KBM-7 (cell line): ENCODE measurements at regions of chr3 and their contacts with region 1.

Region 1: DNA sequence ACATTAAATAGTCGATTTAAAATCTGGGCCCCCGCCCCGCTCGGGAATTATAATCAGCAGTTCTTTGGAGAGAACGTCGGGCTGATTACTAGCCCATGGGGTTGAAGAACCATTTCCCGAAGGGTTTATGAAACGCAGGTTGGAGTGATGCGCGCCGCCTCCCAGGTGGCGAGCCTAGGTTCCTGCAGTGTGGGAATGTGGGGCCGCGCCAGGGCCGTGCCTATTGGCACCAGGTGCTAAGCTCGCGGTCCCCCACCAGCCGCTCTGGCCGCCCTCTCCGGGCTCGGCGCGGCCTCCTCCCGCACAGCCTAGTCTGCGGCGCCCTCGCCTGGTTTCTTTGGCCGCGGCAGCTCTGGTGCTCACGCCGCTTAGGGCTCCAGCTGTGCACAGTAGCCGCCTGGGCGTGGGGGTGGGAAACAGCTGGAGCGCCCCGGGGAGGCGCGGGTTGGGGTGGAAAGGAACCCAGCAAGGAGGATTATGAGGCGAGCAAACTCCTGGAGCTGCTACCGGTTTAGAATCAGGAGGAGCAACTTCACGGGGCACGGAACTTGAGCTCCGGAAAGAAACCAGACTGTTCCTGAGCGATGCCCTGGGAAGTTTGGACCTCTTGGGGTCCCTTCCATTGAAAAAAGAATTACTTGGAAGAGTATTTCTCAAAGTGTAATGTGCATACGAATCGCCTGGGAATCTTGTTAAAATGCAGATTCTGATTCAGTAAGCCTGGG is 5.6 kb upstream of the MECOM start:
- DNase-seq: peak; percentile 74

Region 2: GRCh38 chr3:169091216-169091823 is 577.8 kb before region 1 on chr3:
- in situ Hi-C with region 1: no loop called
- DNase-seq: no peak

Region 3: DNA sequence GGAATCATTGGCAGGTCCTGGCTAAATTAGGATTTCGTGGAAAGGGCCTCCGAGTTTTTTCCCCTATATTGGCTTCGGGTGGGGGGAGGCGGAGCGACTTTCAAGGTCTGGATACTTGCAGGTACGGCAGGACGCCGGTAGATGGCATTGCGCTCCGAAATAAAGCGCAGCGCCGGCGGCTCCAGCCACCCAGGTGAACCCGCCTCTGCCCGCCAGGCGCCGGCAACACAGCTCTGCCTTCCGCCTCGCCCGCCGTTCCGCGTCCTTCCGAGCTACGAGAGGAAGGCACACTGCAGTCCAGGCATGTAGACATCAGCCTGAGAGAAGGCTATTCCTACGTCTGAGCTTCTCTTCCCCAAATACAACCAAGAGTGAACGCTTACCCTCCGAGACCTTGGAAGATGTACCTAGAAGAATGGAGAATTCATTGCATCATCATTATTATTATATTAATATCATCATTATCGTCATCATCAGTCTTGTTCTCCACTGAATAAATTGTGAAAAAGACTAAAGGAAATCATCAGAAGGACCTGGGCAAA is 519.7 kb before region 1 on chr3:
- in situ Hi-C with region 1: loop called (anchors 25 kb)
- DNase-seq: peak; percentile 84